CD4-positive, alpha-beta memory T cell (primary cell): ENCODE measurements at regions of chr19 and their contacts with region 1.

Region 1: DNA sequence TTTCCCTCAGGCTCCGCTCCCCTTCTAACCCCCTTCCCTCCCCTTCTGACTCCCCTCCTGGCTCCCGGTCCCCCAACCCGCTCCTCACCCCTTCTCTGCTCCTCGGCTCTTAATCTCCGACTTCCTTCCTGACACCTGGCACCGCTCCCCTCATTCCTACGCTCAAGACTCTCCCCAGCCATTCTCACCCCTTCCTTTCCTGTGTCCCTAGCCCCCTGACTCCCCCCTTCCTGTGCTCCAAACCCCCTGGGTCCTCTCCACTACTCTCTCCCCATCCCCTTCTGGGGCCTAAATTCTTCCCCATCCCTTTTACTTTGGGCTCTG is 658 bp downstream of the CLPP start:
- DNase-seq: peak in 1 of 5 donors; percentile 14
- H3K4me3 ChIP-seq: peak overlapping the region; percentile 92 to 97
- H3K4me3 Mint-ChIP-seq: peak overlapping the region; percentile 90 to 98 (median 95)
- H3K27ac ChIP-seq: peak overlapping the region; percentile 78
- H3K27ac Mint-ChIP-seq: peak overlapping the region; percentile 91 to 97 (median 95)
- H3K4me1 ChIP-seq: peaks cover 23% of the 10 kb centered on the region
- H3K4me1 Mint-ChIP-seq: peaks cover 10 to 29% (median 19%) of the 10 kb centered on the region in 4 donors
- H3K27me3 ChIP-seq: no peaks in the 10 kb centered on the region
- H3K27me3 Mint-ChIP-seq: no peaks in the 10 kb centered on the region

Region 2: DNA sequence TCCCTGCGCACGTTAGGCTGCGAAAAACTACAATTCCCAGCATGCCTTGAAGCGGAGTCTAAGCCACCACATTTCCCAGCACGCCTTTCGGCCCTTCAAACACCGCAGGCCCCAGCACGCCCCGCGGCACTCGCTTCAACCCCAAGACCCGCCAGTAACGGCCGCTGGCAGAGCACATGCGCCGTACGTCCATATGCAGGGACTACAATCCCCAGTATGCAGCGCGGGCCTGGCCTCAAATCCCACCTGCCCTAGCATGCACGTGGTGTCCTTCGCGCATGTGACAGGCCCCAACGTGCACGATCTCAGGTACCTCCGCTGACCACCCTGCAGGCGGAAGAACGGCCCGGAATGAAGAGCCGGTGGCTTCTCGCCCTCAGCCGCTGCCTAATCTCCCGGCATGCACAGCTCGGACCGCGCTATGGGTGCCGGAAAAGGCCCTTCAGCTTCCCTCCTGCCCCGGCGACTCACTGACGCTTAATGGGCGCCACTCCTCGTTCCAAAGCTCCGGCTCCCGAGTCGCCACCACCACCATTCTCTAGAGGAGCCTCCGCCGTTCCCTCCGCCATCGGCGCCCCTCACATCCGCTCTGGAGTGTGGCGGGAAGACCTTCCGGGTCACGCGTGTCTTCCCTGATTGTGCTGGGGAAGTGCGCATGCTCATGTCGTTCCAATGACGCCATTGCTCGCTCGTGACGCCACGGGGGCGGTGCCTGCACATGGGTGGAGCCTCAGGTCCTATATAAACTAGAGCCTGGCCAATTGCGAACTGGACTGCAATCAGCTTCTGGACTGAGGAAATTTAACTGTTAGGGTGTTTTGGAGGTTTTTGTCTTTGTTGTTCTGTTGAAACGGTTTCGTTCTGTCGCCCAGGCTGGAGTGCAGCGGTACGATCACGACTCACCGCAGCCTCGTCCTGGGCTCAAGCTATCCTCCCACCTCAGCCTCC is 571.1 kb before region 1 on chr19 and contains the start of gene DUS3L:
- CTCF ChIA-PET with region 1: no interaction called
- POLR2A ChIA-PET with region 1: no interaction called
- intact Hi-C with region 1: loop called (anchors 10 kb)
- DNase-seq: peak; percentile 92 to 98 (median 97)
- H3K4me3 ChIP-seq: peak within 1 kb of the TSS; percentile 62 to 93
- H3K4me3 Mint-ChIP-seq: peak within 1 kb of the TSS; percentile 96 to 100 (median 99)
- H3K27ac ChIP-seq: peak within 1 kb of the TSS; percentile 97
- H3K27ac Mint-ChIP-seq: peak within 1 kb of the TSS; percentile 94 to 100 (median 100)
- H3K4me1 ChIP-seq: peaks cover 14% of the 10 kb centered on the region
- H3K4me1 Mint-ChIP-seq: peaks cover 11 to 24% (median 12%) of the 10 kb centered on the region in 4 donors
- H3K27me3 ChIP-seq: no peaks in the 10 kb centered on the region
- H3K27me3 Mint-ChIP-seq: peaks cover 0 to 2% of the 10 kb centered on the region in 2 donors
- total RNA-seq, gene DUS3L: 58.7 to 72.9 TPM

Region 3: GRCh38 chr19:5880604-5881078 is 481.3 kb before region 1 on chr19:
- CTCF ChIA-PET with region 1: no interaction called
- POLR2A ChIA-PET with region 1: no interaction called
- intact Hi-C with region 1: no loop called
- DNase-seq: no peak
- H3K4me3 ChIP-seq: no peak overlapping the region
- H3K4me3 Mint-ChIP-seq: no peak overlapping the region
- H3K27ac ChIP-seq: no peak overlapping the region
- H3K27ac Mint-ChIP-seq: no peak overlapping the region
- H3K4me1 ChIP-seq: no peaks in the 10 kb centered on the region
- H3K4me1 Mint-ChIP-seq: no peaks in the 10 kb centered on the region
- H3K27me3 ChIP-seq: no peaks in the 10 kb centered on the region
- H3K27me3 Mint-ChIP-seq: peaks cover 12 to 16% of the 10 kb centered on the region in 2 donors

Region 4: DNA sequence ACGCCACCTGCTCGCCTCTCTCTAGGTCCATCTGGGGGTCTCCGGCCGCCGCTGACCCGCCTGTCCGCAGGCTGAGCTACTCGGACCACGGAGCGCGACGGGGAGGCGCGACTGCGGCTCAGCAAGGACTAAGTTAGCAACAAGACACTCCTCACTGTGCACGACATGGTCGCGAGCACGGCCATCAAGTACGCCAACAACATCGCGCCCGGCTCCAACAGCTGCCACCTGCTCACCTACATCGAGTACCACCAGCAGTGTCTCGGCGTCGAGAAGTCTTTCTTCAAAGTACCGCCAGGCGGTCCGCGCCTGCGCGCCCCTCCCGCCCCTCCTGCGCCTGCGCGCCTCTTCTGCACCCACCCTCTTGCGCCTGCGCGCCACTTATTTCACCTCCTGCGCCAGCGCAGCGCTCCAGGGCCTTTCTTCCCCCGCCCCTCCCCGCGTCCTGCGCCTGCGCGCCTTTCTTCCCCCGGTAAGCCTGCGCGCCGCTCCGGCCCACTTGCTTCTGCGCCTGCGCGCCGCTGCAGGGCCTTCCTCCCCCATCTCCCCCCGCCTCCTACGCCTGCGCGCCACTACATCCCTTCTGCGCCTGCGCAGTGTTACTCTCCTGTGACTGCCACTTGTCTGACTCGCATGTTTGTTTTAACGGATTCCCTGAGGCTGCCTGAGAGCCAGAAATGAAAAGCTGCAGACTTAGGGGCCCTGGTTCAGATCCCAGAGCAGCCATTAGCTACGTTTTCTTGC is 162.6 kb before region 1 on chr19:
- CTCF ChIA-PET with region 1: no interaction called
- POLR2A ChIA-PET with region 1: no interaction called
- intact Hi-C with region 1: loop called (anchors 1 kb)
- DNase-seq: peak; percentile 99 to 100 (median 99)
- H3K4me3 ChIP-seq: peak overlapping the region; percentile 52 to 89
- H3K4me3 Mint-ChIP-seq: peak overlapping the region; percentile 88 to 97 (median 94)
- H3K27ac ChIP-seq: peak overlapping the region; percentile 64
- H3K27ac Mint-ChIP-seq: peak overlapping the region; percentile 83 to 98 (median 95)
- H3K4me1 ChIP-seq: peaks cover 13% of the 10 kb centered on the region
- H3K4me1 Mint-ChIP-seq: peaks cover 10 to 21% (median 10%) of the 10 kb centered on the region in 4 donors
- H3K27me3 ChIP-seq: peaks cover 2% of the 10 kb centered on the region
- H3K27me3 Mint-ChIP-seq: peaks cover 2 to 4% of the 10 kb centered on the region in 2 donors

Region 5: GRCh38 chr19:6279931-6280591 is 81.9 kb before region 1 on chr19 and contains the start of gene MLLT1:
- CTCF ChIA-PET with region 1: no interaction called
- POLR2A ChIA-PET with region 1: no interaction called
- intact Hi-C with region 1: no loop called
- DNase-seq: peak; percentile 91 to 94 (median 93)
- H3K4me3 ChIP-seq: peak within 1 kb of the TSS; percentile 23 to 57
- H3K4me3 Mint-ChIP-seq: peak within 1 kb of the TSS; percentile 75 to 91 (median 90)
- H3K27ac ChIP-seq: peak within 1 kb of the TSS; percentile 59
- H3K27ac Mint-ChIP-seq: peak within 1 kb of the TSS; percentile 79 to 99 (median 96)
- H3K4me1 ChIP-seq: peaks cover 39% of the 10 kb centered on the region
- H3K4me1 Mint-ChIP-seq: peaks cover 29 to 45% (median 36%) of the 10 kb centered on the region in 4 donors
- H3K27me3 ChIP-seq: no peaks in the 10 kb centered on the region
- H3K27me3 Mint-ChIP-seq: peaks cover 0 to 2% of the 10 kb centered on the region in 2 donors
- total RNA-seq, gene MLLT1: 41.1 to 41.7 TPM

Region 6: GRCh38 chr19:6312018-6312417 is 50.0 kb before region 1 on chr19:
- CTCF ChIA-PET with region 1: no interaction called
- POLR2A ChIA-PET with region 1: no interaction called
- intact Hi-C with region 1: no loop called
- DNase-seq: no peak
- H3K4me3 ChIP-seq: no peak overlapping the region
- H3K4me3 Mint-ChIP-seq: no peak overlapping the region
- H3K27ac ChIP-seq: no peak overlapping the region
- H3K27ac Mint-ChIP-seq: no peak overlapping the region
- H3K4me1 ChIP-seq: no peaks in the 10 kb centered on the region
- H3K4me1 Mint-ChIP-seq: no peaks in the 10 kb centered on the region
- H3K27me3 ChIP-seq: no peaks in the 10 kb centered on the region
- H3K27me3 Mint-ChIP-seq: no peaks in the 10 kb centered on the region

Region 7: GRCh38 chr19:6393074-6393983 is 31.3 kb after region 1 on chr19 and contains the start of gene GTF2F1:
- CTCF ChIA-PET with region 1: interaction called, 3 read pairs
- POLR2A ChIA-PET with region 1: interaction called, 22 read pairs
- intact Hi-C with region 1: loop called (anchors 1 kb)
- DNase-seq: peak; percentile 93 to 95 (median 94)
- H3K4me3 ChIP-seq: peak within 1 kb of the TSS; percentile 68 to 82
- H3K4me3 Mint-ChIP-seq: peak within 1 kb of the TSS; percentile 93 to 98 (median 96)
- H3K27ac ChIP-seq: peak within 1 kb of the TSS; percentile 96
- H3K27ac Mint-ChIP-seq: peak within 1 kb of the TSS; percentile 96 to 99 (median 98)
- H3K4me1 ChIP-seq: peaks cover 15% of the 10 kb centered on the region
- H3K4me1 Mint-ChIP-seq: peaks cover 17 to 30% (median 23%) of the 10 kb centered on the region in 4 donors
- H3K27me3 ChIP-seq: no peaks in the 10 kb centered on the region
- H3K27me3 Mint-ChIP-seq: no peaks in the 10 kb centered on the region
- total RNA-seq, gene GTF2F1: 56.3 to 57.7 TPM

Region 8: GRCh38 chr19:6460101-6460853 is 98.3 kb after region 1 on chr19:
- CTCF ChIA-PET with region 1: no interaction called
- POLR2A ChIA-PET with region 1: interaction called, 3 read pairs
- intact Hi-C with region 1: loop called (anchors 1 kb)
- DNase-seq: peak; percentile 97 to 98 (median 97)
- H3K4me3 ChIP-seq: peak overlapping the region; percentile 85 to 90
- H3K4me3 Mint-ChIP-seq: peak overlapping the region; percentile 93 to 99 (median 96)
- H3K27ac ChIP-seq: peak overlapping the region; percentile 70
- H3K27ac Mint-ChIP-seq: peak overlapping the region; percentile 86 to 99 (median 93)
- H3K4me1 ChIP-seq: peaks cover 24% of the 10 kb centered on the region
- H3K4me1 Mint-ChIP-seq: peaks cover 12 to 45% (median 25%) of the 10 kb centered on the region in 4 donors
- H3K27me3 ChIP-seq: no peaks in the 10 kb centered on the region
- H3K27me3 Mint-ChIP-seq: no peaks in the 10 kb centered on the region

Region 9: DNA sequence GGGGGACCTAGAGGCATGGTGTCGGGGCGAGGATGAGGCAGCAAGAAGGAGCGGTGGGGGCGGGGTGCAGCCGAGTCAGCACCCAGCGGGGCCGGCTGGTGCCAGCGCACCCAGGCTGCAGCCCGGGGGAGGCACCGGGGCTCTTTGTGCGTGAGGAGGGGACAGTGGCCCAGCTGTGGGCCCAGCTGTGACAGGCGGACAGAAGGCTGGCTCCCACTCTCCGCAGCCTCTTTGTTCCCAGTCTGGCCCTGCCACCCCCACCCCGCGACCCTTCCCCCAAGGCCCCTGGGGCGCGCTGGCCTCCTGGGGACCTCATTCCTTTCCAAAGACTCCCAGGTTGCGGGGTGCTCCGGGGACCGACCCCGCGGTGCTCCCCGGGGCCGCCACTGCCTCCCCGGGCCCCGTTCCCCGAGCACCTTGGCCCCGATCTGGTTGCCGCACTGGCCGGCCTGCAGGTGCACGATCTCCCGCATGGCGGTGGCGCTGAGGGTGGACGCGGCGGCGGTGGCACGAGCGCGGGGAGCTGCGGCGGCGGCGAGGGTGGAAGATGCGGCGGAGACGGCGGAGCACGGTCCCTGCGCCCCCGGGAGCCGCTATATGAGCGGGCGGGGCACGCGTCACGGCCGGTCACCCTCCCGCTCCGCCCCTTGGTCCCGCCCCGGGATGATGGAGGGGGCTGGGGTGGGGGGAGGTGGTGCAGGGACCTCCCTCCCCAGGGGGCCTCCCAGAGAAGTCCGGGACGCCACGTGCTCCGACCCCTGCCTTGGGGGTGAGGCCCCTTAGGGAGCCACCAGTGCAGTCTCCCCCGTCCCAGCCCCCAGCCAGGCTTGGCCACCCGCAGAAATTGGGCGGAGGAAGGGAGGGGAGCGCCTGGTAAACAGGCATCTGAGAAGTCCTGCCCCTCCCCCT is 140.0 kb after region 1 on chr19 and contains the start of gene TUBB4A:
- CTCF ChIA-PET with region 1: no interaction called
- POLR2A ChIA-PET with region 1: interaction called, 3 read pairs
- intact Hi-C with region 1: loop called (anchors 2 kb)
- DNase-seq: peak in 3 of 5 donors; percentile 15 to 21 (median 17)
- H3K4me3 ChIP-seq: peak within 1 kb of the TSS in 1 of 2 donors; percentile 41
- H3K4me3 Mint-ChIP-seq: peak within 1 kb of the TSS; percentile 79 to 88 (median 84)
- H3K27ac ChIP-seq: no peak within 1 kb of the TSS
- H3K27ac Mint-ChIP-seq: peak within 1 kb of the TSS in 2 of 7 donors; percentile 42 to 81
- H3K4me1 ChIP-seq: peaks cover 18% of the 10 kb centered on the region
- H3K4me1 Mint-ChIP-seq: peaks cover 12 to 22% (median 16%) of the 10 kb centered on the region in 4 donors
- H3K27me3 ChIP-seq: peaks cover 7% of the 10 kb centered on the region
- H3K27me3 Mint-ChIP-seq: peaks cover 2 to 15% of the 10 kb centered on the region in 2 donors
- total RNA-seq, gene TUBB4A: 3.9 to 4.7 TPM